ENCODE measurements at regions of chr11 and their contacts with region 1.

Region 1: DNA sequence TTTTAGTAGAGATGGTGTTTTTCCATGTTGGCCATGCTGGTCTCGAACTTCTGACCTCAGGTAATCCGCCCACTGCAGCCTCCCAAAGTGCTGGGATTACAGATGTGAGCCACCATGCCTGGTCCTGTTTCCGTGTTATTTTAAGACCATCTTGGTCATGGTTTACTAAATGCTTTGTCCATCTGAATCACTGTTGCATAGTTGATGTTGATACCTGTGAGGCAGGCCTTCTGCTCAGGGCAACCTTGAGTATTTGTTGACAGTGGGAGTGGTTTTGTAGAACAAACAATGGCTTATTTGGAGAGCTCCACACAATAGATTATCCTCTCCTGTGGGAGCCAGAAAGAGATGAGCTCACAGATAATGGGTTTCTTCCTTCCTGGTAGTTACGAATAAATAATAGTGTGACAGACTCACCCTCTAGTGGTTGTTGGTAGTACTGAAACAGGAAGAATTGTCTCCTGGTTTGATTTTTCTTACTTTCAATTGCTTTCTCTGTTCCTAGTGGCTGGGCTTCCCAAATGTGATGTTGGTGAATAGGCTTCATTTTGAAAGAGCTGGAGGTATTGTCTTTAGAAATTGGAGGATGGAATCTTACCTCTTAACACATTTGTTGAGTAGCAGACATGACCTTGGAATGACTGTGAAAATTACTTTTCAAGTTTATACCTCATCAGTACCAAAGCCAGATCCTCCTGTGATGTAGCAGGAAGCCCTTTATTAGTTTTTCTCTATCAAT is 39.0 kb downstream of the CTNND1 start:
- DNase-seq: peak; percentile 66 to 73 (median 68)
- H3K4me3 ChIP-seq: no peak overlapping the region
- H3K27ac ChIP-seq: no peak overlapping the region
- H3K4me1 ChIP-seq: peaks cover 9 to 25% (median 15%) of the 10 kb centered on the region in 4 experiments
- H3K27me3 ChIP-seq: no peaks in the 10 kb centered on the region

Region 2: GRCh38 chr11:57358543-57358961 is 442.1 kb before region 1 on chr11:
- CTCF ChIA-PET with region 1: no interaction called
- POLR2A ChIA-PET with region 1: no interaction called
- DNase-seq: peak in 2 of 3 donors; percentile 49 to 62
- H3K4me3 ChIP-seq: no peak overlapping the region
- H3K27ac ChIP-seq: no peak overlapping the region
- H3K4me1 ChIP-seq: peaks cover 21 to 63% (median 49%) of the 10 kb centered on the region in 4 experiments
- H3K27me3 ChIP-seq: no peaks in the 10 kb centered on the region

Region 3: GRCh38 chr11:57667736-57668435 is 132.7 kb before region 1 on chr11 and contains the start of gene ZDHHC5:
- CTCF ChIA-PET with region 1: interaction called, 11 read pairs
- POLR2A ChIA-PET with region 1: no interaction called
- DNase-seq: peak; percentile 100
- H3K4me3 ChIP-seq: peak within 1 kb of the TSS; percentile 84 to 99 (median 97)
- H3K27ac ChIP-seq: peak within 1 kb of the TSS; percentile 100
- H3K4me1 ChIP-seq: peaks cover 10 to 27% (median 20%) of the 10 kb centered on the region in 4 experiments
- H3K27me3 ChIP-seq: no peaks in the 10 kb centered on the region

Region 4: GRCh38 chr11:57741132-57742086 is 59.2 kb before region 1 on chr11 and contains the start of gene SELENOH:
- CTCF ChIA-PET with region 1: interaction called, 100 read pairs
- POLR2A ChIA-PET with region 1: no interaction called
- DNase-seq: peak; percentile 97 to 99 (median 99)
- H3K4me3 ChIP-seq: peak within 1 kb of the TSS; percentile 72 to 98 (median 91)
- H3K27ac ChIP-seq: peak within 1 kb of the TSS; percentile 89 to 96
- H3K4me1 ChIP-seq: peaks cover 13 to 26% (median 20%) of the 10 kb centered on the region in 4 experiments
- H3K27me3 ChIP-seq: no peaks in the 10 kb centered on the region

Region 5: GRCh38 chr11:57751676-57752253 is 48.8 kb before region 1 on chr11 and contains the start of gene BTBD18:
- CTCF ChIA-PET with region 1: interaction called, 571 read pairs
- POLR2A ChIA-PET with region 1: interaction called, 5 read pairs
- DNase-seq: peak; percentile 25 to 42 (median 40)
- H3K4me3 ChIP-seq: no peak within 1 kb of the TSS
- H3K27ac ChIP-seq: no peak within 1 kb of the TSS
- H3K4me1 ChIP-seq: no peaks in the 10 kb centered on the region
- H3K27me3 ChIP-seq: no peaks in the 10 kb centered on the region

Region 6: DNA sequence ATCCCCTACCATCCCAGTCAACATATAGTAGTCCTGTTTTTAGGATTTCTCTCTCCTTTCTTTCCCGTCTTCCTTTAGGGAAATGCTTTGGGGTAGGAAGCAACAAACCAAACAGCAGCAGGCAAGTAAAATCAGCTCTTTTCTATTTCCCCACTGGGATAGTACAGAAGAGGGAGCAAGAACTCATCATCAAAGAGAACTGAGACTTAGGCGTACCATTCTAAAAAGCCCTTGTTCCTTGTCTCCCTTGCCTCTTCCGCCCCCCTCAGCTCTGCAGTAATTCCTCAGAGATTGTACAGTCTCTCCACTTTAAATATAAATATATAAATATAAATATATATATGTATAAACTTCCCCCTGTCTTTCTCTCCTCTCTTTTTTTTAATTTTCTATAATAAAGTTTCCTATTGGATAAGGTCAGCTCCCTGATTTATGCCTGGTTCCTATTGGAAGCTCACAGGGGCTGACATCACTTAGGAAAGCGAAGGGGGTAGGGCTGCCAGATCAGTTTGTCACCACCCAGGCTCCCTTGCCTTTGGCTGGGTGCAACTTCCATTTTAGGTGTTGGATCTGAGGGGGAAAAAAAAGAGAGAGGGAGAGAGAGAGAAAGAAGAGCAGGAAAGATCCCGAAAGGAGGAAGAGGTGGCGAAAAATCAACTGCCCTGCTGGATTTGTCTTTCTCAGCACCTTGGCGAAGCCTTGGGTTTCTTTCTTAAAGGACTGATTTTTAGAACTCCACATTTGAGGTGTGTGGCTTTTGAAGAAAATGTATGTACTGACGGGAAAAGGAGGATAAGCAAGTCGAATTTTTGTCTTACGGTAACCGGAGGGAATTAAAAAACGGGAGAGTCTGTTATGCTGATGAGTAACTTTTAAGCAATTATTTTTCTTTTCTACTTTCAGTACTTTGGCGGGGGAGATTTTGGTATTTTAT is 39.0 kb before region 1 on chr11 and contains the start of gene CTNND1:
- CTCF ChIA-PET with region 1: interaction called, 571 read pairs
- POLR2A ChIA-PET with region 1: interaction called, 10 read pairs
- DNase-seq: peak; percentile 94 to 97 (median 96)
- H3K4me3 ChIP-seq: peak within 1 kb of the TSS; percentile 31 to 99 (median 87)
- H3K27ac ChIP-seq: peak within 1 kb of the TSS; percentile 93 to 98
- H3K4me1 ChIP-seq: peaks cover 12 to 33% (median 25%) of the 10 kb centered on the region in 4 experiments
- H3K27me3 ChIP-seq: no peaks in the 10 kb centered on the region

Region 7: DNA sequence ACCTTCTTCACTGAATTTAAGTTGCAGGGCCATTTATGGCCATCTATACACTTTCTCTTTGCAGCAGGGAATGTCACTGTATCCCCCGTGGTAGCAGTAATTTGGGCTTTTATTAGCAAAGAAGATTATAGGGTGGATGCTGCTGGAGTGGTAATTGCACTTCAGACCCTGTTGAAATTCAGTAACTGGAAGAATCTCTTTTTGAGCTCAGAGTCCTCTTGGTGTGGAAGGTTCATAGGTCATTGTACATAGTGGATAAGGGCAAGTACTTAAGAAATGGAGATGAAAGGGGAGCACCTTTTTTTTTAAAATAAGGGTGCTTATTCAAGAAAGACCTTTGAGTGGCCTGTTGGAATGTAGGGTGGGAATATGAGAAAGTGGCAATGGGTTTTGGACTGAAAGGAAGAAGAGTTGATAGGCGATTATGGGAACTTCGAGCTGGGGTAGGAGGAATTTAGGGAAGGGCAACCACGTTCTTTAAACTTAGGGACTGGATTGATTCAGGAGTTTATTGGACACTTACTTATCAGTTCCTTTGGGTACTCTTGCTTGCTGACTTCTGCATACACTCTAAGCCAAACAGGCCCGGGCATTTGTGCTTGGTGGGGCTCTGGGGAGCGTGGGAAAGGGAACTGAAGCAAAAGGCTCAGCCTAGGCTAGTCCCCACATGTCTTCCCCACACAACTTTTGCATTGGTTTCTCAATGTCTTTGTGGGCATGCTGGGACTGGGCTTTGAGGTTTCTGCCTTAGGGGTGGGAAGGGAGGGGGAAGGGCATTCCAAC is 12.5 kb before region 1 on chr11:
- CTCF ChIA-PET with region 1: interaction called, 571 read pairs
- POLR2A ChIA-PET with region 1: no interaction called
- DNase-seq: peak in 2 of 3 donors; percentile 17 to 24
- H3K4me3 ChIP-seq: peak overlapping the region in 1 of 7 experiments; percentile 24
- H3K27ac ChIP-seq: no peak overlapping the region
- H3K4me1 ChIP-seq: peaks cover 10 to 60% (median 25%) of the 10 kb centered on the region in 4 experiments
- H3K27me3 ChIP-seq: no peaks in the 10 kb centered on the region

Region 8: DNA sequence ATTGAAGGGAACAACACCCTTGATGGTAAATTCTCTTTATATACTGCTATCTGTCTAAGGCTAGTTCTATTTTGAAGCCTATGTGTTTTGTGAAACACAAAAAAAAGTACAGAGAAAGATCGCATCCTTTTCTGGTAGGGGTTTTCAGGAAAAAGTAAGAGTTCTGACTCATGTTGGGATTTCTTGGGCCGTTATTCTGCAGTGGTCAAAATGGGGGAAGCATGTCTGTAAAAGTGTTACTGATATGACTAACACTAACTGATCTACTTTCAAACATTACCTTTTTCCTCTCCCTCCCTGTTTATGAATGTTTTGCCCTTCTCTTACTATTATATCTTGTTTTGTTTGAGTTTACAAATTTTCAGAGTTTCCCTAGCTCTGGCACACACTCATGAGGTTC is 14.9 kb after region 1 on chr11:
- CTCF ChIA-PET with region 1: interaction called, 10 read pairs
- POLR2A ChIA-PET with region 1: no interaction called
- DNase-seq: no peak
- H3K4me3 ChIP-seq: no peak overlapping the region
- H3K27ac ChIP-seq: no peak overlapping the region
- H3K4me1 ChIP-seq: no peaks in the 10 kb centered on the region
- H3K27me3 ChIP-seq: no peaks in the 10 kb centered on the region

Measured in common myeloid progenitor, CD34-positive (primary cell).